ENCODE measurements at regions of chr5 and their contacts with region 1.

Region 1: DNA sequence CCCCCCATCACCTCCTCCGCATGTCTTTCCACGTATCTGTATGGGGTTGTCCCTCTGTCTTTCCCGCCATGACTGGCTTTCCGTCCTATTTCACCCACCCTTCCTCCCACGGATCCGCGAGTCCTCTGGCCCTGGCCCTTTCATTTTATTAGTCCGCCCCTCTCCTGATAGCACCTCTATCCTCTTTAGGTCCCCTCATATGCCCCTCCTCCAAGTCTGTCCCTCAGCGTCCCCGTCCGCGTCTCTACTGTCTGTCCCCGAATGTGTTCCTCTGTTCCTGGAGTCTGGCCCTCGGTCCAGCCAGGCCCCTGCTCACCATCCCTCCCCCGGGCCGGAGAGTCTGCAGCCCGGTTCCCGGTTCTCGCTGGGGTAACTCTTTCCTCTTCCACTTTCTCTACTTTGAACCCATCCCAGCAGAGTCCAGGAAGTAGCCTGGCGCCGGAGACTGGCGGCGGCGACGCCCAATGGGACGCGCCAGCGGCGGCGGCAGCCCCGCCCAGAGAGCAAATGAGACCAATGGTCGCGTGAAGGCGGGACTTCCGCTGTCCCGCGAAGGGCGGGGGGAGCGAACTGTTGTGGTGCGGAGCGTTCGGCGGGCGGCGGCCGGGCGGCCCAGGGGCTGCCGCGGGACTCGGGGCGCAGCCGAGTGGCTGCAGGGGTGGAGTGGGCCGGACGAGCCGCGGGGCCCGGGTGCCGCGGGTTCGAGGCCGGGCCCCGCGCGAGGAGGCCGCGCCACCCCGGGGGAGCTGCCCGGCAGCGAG is at the start of gene SAP30L:
- DNase-seq: peak; percentile 99
- H3K4me3 Mint-ChIP-seq: peak within 1 kb of the TSS; percentile 99
- H3K27ac Mint-ChIP-seq: peak within 1 kb of the TSS; percentile 96
- H3K4me1 Mint-ChIP-seq: peaks cover 42% of the 10 kb centered on the region
- H3K27me3 Mint-ChIP-seq: no peaks in the 10 kb centered on the region
- total RNA-seq, gene SAP30L: 31.4 and 37.7 TPM in 2 replicates

Region 2: GRCh38 chr5:154038707-154039457 is 406.7 kb before region 1 on chr5 and contains the starts of genes FAM114A2 and MFAP3:
- intact Hi-C with region 1: loop called (anchors 1 kb)
- DNase-seq: peak; percentile 97
- H3K4me3 Mint-ChIP-seq: peak within 1 kb of the TSS; percentile 96
- H3K27ac Mint-ChIP-seq: peak within 1 kb of the TSS; percentile 96
- H3K4me1 Mint-ChIP-seq: peaks cover 31% of the 10 kb centered on the region
- H3K27me3 Mint-ChIP-seq: no peaks in the 10 kb centered on the region
- total RNA-seq, gene FAM114A2: 23.6 and 27.3 TPM in 2 replicates
- total RNA-seq, gene MFAP3: 23.1 and 26.4 TPM in 2 replicates

Region 3: DNA sequence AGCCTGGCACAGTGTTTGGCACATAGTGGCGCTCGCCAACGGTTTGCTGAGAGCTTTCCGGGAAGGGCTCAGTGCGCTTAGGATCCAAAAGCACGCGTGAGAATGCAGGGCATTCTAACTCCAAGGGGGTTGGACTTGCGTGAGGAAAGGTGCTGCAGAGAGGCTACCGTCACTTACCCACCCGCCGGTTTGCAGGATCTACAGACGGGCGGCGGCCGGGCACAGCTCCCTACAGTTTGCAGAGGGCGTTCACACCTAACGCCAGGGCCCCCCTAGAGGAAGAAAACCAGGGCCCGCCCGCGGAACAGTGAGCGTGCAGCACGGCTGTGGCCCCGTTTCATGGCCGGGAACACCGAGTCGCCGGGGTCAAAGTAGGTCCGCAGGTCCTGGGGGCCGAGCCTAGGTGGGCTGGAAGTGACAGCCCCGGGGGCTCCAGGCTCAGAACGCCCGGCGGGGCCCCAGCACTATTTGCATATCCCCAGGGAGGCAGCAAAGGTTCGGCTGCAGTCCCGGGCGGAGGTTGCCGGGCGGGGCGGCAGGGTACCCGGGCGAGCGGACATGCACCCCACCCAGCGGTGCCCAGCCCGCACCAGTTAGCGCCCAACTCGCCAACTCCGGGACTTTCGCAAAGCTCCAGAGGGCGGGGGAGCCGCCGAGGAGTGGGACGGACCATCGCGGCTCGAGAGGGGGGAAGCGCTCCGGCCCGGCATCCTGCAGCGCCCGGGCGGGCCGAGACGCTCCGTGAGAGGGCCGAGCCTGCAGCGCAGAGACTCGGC is 255.6 kb before region 1 on chr5:
- intact Hi-C with region 1: loop called (anchors 2 kb)
- DNase-seq: peak; percentile 95
- H3K4me3 Mint-ChIP-seq: peak overlapping the region; percentile 89
- H3K27ac Mint-ChIP-seq: peak overlapping the region; percentile 77
- H3K4me1 Mint-ChIP-seq: peaks cover 41% of the 10 kb centered on the region
- H3K27me3 Mint-ChIP-seq: peaks cover 5% of the 10 kb centered on the region

Region 4: DNA sequence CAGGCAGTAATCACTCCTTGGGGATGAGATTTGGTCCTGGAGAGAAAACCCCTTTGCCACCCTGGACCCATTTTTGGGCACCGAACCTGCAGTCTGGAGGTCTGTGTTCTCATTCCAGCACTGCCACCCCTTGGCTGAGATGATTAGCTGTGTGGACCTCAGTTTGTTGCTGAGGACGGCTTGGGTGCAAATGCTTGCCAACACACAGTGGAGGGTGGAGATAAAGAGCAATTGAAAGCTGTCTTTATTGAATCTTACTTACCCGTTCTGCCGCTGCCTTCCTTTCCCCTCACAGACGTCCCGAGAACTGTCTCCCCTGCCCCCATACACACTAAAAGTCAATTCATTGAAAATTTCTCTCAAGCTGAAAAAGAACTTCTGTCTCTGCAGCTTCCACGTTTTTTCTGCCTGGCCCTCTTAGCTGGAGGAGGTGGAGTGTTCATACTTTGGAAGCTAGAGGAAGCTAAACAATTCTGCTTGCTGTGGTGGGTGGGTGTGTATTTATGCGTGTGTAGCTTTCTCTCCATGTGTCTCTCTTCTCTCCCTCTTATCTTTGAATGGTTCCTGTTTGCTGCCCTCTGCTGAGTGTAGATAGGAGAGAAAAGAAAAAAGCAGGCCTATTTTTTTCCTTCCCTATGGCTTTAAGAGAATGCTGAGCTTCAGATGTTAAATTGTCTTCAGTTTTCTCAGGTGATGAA is 248.5 kb before region 1 on chr5:
- intact Hi-C with region 1: loop called (anchors 2 kb)
- DNase-seq: peak; percentile 69
- H3K4me3 Mint-ChIP-seq: peak overlapping the region; percentile 79
- H3K27ac Mint-ChIP-seq: peak overlapping the region; percentile 92
- H3K4me1 Mint-ChIP-seq: peaks cover 77% of the 10 kb centered on the region
- H3K27me3 Mint-ChIP-seq: no peaks in the 10 kb centered on the region

Region 5: DNA sequence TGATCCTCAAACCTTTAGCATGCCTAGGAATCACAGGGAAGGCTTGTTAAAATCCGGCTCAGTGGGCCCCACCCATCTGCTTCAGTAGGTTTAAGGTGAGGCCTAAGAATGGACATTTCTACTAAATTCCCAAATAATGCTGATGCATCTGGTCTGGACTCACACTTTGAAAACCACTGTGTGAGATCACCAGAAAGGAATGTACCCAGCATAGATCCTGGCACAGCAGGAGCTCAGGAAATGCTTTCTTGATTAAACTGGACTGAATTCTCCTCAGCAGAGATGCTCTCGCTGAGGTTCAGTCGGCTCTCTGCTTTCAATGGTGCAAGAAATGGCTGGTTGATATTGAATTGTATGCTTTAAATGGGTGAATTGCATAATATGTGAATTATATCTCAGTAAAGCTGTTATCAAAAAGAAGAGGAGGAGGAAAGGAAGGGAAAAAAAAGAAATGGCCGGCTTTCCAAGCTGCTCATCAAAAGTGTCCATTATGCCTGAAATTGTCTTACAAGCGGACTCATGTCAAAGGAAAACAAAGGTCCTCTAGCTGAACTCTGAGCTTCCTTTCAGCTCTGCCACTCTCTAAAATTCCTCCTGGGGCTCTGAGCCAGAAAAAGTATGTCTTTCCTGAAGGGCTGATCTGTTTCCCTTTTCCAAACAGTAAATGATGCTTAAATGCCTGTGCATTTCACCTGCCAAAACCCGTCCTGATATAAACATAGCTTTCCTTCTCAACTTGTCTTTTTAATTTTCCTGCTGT is 77.4 kb before region 1 on chr5:
- intact Hi-C with region 1: no loop called
- DNase-seq: no peak
- H3K4me3 Mint-ChIP-seq: no peak overlapping the region
- H3K27ac Mint-ChIP-seq: no peak overlapping the region
- H3K4me1 Mint-ChIP-seq: no peaks in the 10 kb centered on the region
- H3K27me3 Mint-ChIP-seq: no peaks in the 10 kb centered on the region

Region 6: GRCh38 chr5:154857530-154858296 is 412.1 kb after region 1 on chr5:
- intact Hi-C with region 1: loop called (anchors 2 kb)
- DNase-seq: peak; percentile 96
- H3K4me3 Mint-ChIP-seq: peak overlapping the region; percentile 100
- H3K27ac Mint-ChIP-seq: peak overlapping the region; percentile 98
- H3K4me1 Mint-ChIP-seq: peaks cover 29% of the 10 kb centered on the region
- H3K27me3 Mint-ChIP-seq: no peaks in the 10 kb centered on the region

Region 7: DNA sequence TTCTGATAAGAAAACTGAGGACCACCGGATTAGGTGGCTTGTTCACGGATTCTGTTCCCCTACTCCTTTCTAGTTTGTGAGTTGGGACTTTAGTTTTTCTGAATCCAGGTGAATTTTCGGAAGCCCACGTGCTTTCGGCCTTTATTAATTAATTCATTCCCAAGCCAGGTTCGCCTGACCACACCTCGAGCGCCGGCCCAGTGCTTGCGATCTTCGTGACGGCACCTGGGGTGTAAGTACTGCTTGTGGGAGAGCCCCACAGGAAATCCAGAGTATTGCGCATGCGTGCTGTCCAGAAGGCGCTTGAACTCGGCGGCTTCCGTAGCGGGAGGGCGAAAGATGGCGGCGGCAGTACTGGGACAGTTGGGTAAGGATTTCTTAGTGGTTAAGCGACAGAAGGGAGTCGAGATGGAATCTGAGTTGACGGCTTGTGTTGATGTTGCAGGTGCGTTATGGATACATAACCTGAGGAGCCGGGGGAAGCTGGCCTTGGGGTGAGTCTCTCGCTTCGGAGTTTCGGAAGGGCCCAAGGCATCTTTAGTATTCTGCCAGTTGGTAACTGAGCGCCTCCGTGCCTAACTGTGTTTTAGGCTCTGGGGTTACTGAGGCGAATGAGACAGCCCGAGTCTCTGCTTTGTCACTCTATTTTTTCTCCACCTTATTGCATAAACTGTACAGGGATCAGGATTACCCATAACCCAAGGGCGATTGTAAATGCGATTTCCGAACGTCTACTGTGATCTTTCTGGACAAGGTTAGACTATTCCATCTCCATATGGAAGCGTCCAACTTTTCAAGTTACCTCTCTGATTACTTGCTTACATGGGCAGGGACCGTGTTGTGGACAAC is 495.4 kb after region 1 on chr5 and contains the start of gene MRPL22:
- intact Hi-C with region 1: loop called (anchors 2 kb)
- DNase-seq: peak; percentile 99
- H3K4me3 Mint-ChIP-seq: peak within 1 kb of the TSS; percentile 98
- H3K27ac Mint-ChIP-seq: peak within 1 kb of the TSS; percentile 94
- H3K4me1 Mint-ChIP-seq: peaks cover 24% of the 10 kb centered on the region
- H3K27me3 Mint-ChIP-seq: no peaks in the 10 kb centered on the region
- total RNA-seq, gene MRPL22: 83.8 and 89.6 TPM in 2 replicates